ENCODE measurements at regions of chr4 and their contacts with region 1.

Region 1: GRCh38 chr4:40976343-40976742 is 226.6 kb downstream of the NSUN7 start:
- DNase-seq: peak; percentile 30
- H3K4me3 Mint-ChIP-seq: no peak overlapping the region
- H3K27ac Mint-ChIP-seq: no peak overlapping the region
- H3K4me1 Mint-ChIP-seq: no peaks in the 10 kb centered on the region
- H3K27me3 Mint-ChIP-seq: peaks cover 9% of the 10 kb centered on the region

Region 2: GRCh38 chr4:40934671-40935070 is 41.7 kb before region 1 on chr4:
- CTCF ChIA-PET with region 1: no interaction called
- DNase-seq: no peak
- H3K4me3 Mint-ChIP-seq: no peak overlapping the region
- H3K27ac Mint-ChIP-seq: no peak overlapping the region
- H3K4me1 Mint-ChIP-seq: no peaks in the 10 kb centered on the region
- H3K27me3 Mint-ChIP-seq: peaks cover 9% of the 10 kb centered on the region

Region 3: GRCh38 chr4:40986375-40986774 is 10.0 kb after region 1 on chr4:
- CTCF ChIA-PET with region 1: interaction called, 13 read pairs
- DNase-seq: no peak
- H3K4me3 Mint-ChIP-seq: no peak overlapping the region
- H3K27ac Mint-ChIP-seq: no peak overlapping the region
- H3K4me1 Mint-ChIP-seq: no peaks in the 10 kb centered on the region
- H3K27me3 Mint-ChIP-seq: no peaks in the 10 kb centered on the region

Region 4: DNA sequence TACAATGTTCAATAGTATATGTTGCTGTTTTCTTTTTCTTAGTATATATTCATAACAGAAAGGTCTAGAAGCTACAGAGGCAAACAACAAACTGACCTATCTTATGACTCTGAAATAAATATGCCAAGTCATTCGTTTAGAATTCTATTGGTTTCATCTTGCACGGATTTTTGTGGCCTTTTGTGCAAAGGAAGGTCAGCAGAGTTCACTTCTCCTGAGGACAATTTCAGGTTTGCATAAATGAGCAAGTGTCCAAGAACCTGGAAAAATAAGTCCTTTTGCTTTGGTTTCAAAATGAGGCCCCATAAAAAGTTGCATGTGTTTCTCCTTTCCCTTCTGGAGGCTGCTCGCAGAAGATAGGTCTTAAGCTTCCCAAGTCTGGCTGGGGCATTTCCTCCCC is 81.1 kb after region 1 on chr4:
- CTCF ChIA-PET with region 1: no interaction called
- DNase-seq: no peak
- H3K4me3 Mint-ChIP-seq: no peak overlapping the region
- H3K27ac Mint-ChIP-seq: no peak overlapping the region
- H3K4me1 Mint-ChIP-seq: no peaks in the 10 kb centered on the region
- H3K27me3 Mint-ChIP-seq: no peaks in the 10 kb centered on the region